ENCODE measurements at regions of chr14 and their contacts with region 1.

Region 1: DNA sequence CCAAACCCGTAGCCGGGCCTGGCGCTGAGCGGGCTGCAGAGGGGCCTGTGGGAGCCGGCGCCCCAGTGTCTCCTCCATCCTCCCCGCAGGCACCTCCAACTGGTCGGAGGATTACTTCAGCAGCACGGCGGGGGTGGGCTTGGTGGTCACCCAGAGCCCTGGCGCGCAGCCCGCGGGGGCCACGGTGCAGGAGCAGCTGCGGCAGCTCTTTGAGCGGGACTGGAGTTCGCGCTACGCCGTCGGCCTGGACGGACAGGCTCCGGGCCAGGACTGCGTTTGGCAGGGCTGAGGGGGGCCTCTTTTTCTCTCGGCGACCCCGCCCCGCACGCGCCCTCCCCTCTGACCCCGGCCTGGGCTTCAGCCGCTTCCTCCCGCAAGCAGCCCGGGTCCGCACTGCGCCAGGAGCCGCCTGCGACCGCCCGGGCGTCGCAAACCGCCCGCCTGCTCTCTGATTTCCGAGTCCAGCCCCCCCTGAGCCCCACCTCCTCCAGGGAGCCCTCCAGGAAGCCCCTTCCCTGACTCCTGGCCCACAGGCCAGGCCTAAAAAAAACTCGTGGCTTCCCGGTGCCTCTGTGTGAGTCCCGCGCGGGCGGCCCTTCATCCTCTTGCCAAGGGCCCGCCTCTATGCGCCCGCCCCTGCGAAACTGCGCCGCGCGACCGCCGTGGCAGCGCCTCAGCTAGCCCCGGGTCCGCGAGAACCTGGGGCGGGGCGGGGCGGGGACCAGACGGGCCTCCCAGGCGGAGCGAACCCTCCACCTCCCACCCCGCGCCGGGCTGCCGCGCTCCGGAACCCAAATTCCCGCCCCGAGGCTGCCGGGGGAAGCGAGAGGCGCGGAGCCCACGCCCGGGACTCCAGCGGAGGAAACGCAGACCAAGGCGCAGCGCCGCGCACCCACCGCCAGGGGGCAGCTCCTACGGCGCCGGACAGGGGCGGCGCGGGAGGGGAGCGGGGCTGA is 8.3 kb downstream of the PLD4 start:
- DNase-seq: peak; percentile 84
- H3K4me3 Mint-ChIP-seq: peak overlapping the region; percentile 49
- H3K27ac Mint-ChIP-seq: no peak overlapping the region
- H3K4me1 Mint-ChIP-seq: peaks cover 5% of the 10 kb centered on the region
- H3K27me3 Mint-ChIP-seq: peaks cover 7% of the 10 kb centered on the region

Region 2: DNA sequence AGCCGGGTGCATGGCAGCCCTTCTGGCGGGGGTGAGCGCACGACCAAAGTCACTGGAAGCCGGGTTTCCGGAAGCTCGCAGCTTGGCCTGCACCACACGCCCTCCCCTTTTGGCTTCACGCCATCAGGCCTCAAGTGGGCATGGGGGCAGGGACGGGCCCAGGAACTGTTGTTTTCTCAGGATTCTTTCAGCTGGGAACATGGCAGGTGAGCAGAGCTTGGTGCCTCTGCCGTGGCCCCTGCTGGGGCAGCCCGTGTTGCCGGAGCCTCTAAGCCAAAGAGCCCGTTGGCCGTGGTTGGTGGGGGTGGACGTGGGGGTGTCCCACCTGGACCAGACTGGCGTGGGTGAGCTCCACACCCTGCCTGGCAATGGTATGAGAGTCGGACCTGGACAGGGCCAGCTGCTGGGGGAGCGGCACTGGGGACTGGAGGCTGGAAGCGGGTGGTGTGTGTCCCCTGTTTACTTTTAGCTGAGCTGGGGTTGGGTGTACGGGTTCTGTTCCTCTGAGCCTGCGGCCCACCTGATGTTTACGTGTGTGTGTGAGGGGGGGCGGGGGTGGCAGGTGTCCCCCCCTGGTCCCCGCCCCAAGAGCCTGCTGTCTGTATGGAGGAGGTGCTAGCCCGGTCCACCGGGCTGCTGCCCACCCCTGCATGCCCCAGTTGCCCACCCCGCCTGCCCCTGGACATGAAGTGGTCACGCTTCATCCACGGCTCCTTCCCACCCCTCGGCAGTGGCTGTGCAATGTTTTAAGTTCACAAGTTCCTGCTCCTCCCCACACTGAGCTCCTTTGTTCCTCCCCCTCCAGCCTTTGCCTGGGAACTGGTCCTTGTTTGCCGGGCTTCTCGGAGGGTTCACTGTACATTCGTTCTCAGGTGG is 36.9 kb before region 1 on chr14:
- intact Hi-C with region 1: loop called (anchors 2 kb)
- DNase-seq: no peak
- H3K4me3 Mint-ChIP-seq: no peak overlapping the region
- H3K27ac Mint-ChIP-seq: no peak overlapping the region
- H3K4me1 Mint-ChIP-seq: no peaks in the 10 kb centered on the region
- H3K27me3 Mint-ChIP-seq: peaks cover 8% of the 10 kb centered on the region

Region 3: DNA sequence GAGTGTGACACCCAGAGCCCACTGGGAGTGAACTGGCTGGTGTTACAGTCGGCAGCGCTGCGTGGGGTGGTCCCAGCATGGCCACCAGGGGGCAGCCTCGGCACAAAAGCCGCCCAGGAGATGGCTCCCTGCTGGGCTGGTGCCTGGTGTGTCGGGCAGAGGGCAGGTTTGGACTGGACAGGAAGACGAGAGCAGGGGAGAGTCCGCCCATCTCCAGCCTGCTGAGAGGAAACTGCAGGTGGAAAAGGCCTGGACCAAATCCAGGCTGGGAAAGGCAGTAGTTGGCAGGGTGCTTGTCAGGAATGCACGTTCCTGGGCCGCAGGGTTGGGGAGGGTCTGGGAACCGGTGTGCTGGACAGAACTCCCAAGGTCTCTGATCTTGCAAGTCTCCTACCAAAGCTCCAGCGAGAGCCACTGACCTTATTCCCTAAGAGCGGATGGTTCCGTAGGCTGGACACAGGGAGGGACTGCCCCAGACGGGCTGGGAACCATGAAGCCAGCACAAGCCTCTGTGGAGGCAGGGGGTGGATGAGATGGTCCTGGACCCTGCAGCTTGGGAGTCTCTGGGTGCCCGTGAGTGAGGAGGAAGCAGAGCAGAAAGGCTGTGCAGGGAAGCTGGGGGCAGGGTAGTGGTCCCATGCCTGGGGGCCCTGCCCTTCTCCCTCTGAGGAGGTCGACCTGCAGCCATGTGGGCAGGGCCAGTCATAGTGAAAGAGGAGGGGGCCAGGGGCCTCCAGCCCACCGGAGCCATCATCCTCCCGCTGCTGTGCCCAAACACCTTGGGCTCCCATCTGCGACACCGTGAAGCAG is 43.4 kb after region 1 on chr14:
- intact Hi-C with region 1: loop called (anchors 5 kb)
- DNase-seq: peak; percentile 77
- H3K4me3 Mint-ChIP-seq: peak overlapping the region; percentile 64
- H3K27ac Mint-ChIP-seq: peak overlapping the region; percentile 35
- H3K4me1 Mint-ChIP-seq: peaks cover 11% of the 10 kb centered on the region
- H3K27me3 Mint-ChIP-seq: peaks cover 24% of the 10 kb centered on the region